B cell (primary cell): ENCODE measurements at regions of chr13 and their contacts with region 1.

Region 1: GRCh38 chr13:42594970-42595571 is 21.1 kb downstream of the TNFSF11 start:
- DNase-seq: peak; percentile 64
- ATAC-seq: peak; percentile 45
- H3K4me3 ChIP-seq: no peak overlapping the region
- H3K4me3 Mint-ChIP-seq: no peak overlapping the region
- H3K27ac ChIP-seq: no peak overlapping the region
- H3K27ac Mint-ChIP-seq: no peak overlapping the region
- H3K4me1 ChIP-seq: no peaks in the 10 kb centered on the region
- H3K4me1 Mint-ChIP-seq: no peaks in the 10 kb centered on the region
- H3K27me3 ChIP-seq: no peaks in the 10 kb centered on the region
- H3K27me3 Mint-ChIP-seq: no peaks in the 10 kb centered on the region
- CTCF ChIP-seq: peak; percentile 96

Region 2: GRCh38 chr13:42333613-42334328 is 261.3 kb before region 1 on chr13:
- CTCF ChIA-PET with region 1: interaction called, 14 read pairs
- POLR2A ChIA-PET with region 1: no interaction called
- intact Hi-C with region 1: loop called (anchors 2 kb)
- DNase-seq: peak; percentile 55
- ATAC-seq: peak; percentile 57
- H3K4me3 ChIP-seq: no peak overlapping the region
- H3K4me3 Mint-ChIP-seq: no peak overlapping the region
- H3K27ac ChIP-seq: no peak overlapping the region
- H3K27ac Mint-ChIP-seq: no peak overlapping the region
- H3K4me1 ChIP-seq: peaks cover 10 to 16% of the 10 kb centered on the region in 2 donors
- H3K4me1 Mint-ChIP-seq: peaks cover 19% of the 10 kb centered on the region
- H3K27me3 ChIP-seq: no peaks in the 10 kb centered on the region
- H3K27me3 Mint-ChIP-seq: no peaks in the 10 kb centered on the region
- CTCF ChIP-seq: peak; percentile 61

Region 3: GRCh38 chr13:42580644-42581043 is 14.4 kb before region 1 on chr13:
- CTCF ChIA-PET with region 1: interaction called, 10 read pairs
- POLR2A ChIA-PET with region 1: no interaction called
- intact Hi-C with region 1: no loop called
- DNase-seq: no peak
- ATAC-seq: no peak
- H3K4me3 ChIP-seq: no peak overlapping the region
- H3K4me3 Mint-ChIP-seq: no peak overlapping the region
- H3K27ac ChIP-seq: no peak overlapping the region
- H3K27ac Mint-ChIP-seq: no peak overlapping the region
- H3K4me1 ChIP-seq: peaks cover 0 to 3% of the 10 kb centered on the region in 2 donors
- H3K4me1 Mint-ChIP-seq: peaks cover 5% of the 10 kb centered on the region
- H3K27me3 ChIP-seq: peaks cover 0 to 7% (median 5%) of the 10 kb centered on the region in 4 experiments
- H3K27me3 Mint-ChIP-seq: peaks cover 23% of the 10 kb centered on the region
- CTCF ChIP-seq: no peak

Region 4: GRCh38 chr13:42623916-42624315 is 28.8 kb after region 1 on chr13:
- CTCF ChIA-PET with region 1: no interaction called
- POLR2A ChIA-PET with region 1: no interaction called
- intact Hi-C with region 1: no loop called
- DNase-seq: no peak
- ATAC-seq: no peak
- H3K4me3 ChIP-seq: no peak overlapping the region
- H3K4me3 Mint-ChIP-seq: no peak overlapping the region
- H3K27ac ChIP-seq: no peak overlapping the region
- H3K27ac Mint-ChIP-seq: no peak overlapping the region
- H3K4me1 ChIP-seq: no peaks in the 10 kb centered on the region
- H3K4me1 Mint-ChIP-seq: no peaks in the 10 kb centered on the region
- H3K27me3 ChIP-seq: peaks cover 0 to 3% (median 0%) of the 10 kb centered on the region in 4 experiments
- H3K27me3 Mint-ChIP-seq: no peaks in the 10 kb centered on the region
- CTCF ChIP-seq: no peak

Region 5: DNA sequence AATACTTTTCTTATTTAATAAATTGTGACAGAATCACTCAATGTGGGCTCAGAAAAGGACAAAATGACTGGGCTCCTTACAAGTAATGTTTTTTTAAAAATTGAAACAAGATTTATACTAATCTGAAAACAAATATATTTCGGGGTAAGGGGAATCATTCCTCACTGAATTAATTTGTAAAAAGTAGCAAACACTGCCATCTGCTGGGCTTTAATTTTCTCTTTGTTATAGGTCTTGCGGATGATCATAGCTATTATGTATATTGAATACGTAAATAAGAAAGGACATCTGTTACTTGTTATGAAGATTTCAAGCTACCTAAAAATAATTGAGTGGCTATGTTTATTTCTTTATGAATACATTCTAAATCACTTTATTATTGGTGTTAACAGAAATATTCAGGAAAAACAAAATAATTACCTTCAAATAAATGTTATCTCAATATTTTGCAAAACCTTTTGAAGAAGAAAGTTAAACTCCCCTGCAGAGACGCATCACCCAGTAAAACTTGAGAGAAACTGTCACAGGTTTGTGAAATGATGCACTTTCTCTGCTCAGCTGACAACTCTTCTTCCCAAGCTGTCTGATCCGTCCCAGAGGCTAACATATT is 1209.5 kb after region 1 on chr13:
- CTCF ChIA-PET with region 1: interaction called, 45 read pairs
- POLR2A ChIA-PET with region 1: no interaction called
- intact Hi-C with region 1: no loop called
- DNase-seq: peak; percentile 59
- ATAC-seq: no peak
- H3K4me3 ChIP-seq: no peak overlapping the region
- H3K4me3 Mint-ChIP-seq: no peak overlapping the region
- H3K27ac ChIP-seq: no peak overlapping the region
- H3K27ac Mint-ChIP-seq: no peak overlapping the region
- H3K4me1 ChIP-seq: no peaks in the 10 kb centered on the region
- H3K4me1 Mint-ChIP-seq: no peaks in the 10 kb centered on the region
- H3K27me3 ChIP-seq: no peaks in the 10 kb centered on the region
- H3K27me3 Mint-ChIP-seq: peaks cover 13% of the 10 kb centered on the region
- CTCF ChIP-seq: peak; percentile 85

Region 6: DNA sequence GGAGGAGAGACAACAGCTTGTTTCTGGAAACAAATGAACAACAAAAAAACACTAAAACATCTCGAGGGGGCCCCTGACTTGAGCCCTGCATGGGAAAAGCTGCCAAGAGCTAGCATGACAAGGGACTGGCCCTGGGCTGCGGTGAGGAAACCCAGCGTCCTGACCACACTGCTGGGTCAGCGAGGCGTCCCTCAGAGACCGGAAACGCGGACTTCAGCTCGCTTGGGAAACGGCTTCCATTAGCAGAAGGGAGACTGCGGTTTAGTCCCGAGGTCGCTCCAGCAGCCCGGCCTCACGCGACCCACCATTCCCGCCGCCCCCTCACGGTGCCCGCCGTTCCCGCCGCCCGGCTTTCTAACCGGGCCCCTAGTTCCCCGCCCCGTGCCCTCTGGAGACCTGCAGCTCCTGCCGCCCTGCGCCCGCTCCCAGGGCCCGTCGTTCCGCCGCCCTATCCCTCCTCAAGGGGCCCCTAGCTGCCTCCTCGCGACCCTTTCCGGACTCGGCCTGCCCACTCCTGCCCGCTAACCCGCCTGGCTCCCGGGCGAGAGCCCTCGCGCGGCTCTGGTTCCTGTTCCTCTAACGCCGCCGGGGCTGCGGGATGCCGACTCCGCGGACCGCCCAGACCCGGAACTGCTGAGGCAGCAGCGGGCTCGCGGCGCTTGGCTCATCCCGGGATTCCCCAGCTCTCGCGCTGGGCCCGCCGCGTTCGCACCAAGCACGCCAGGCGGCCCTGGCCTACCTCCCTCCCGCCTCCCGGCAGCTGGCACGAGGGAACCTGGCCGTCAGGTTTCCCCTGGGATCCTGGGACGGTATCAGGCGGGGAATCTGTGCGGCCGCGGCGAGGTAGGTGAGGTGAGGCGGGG is 1284.1 kb after region 1 on chr13 and contains the start of gene CCDC122:
- CTCF ChIA-PET with region 1: no interaction called
- POLR2A ChIA-PET with region 1: no interaction called
- intact Hi-C with region 1: loop called (anchors 10 kb)
- DNase-seq: peak; percentile 89
- ATAC-seq: peak; percentile 79
- H3K4me3 ChIP-seq: peak within 1 kb of the TSS; percentile 36 to 78 (median 75)
- H3K4me3 Mint-ChIP-seq: peak within 1 kb of the TSS; percentile 88
- H3K27ac ChIP-seq: peak within 1 kb of the TSS; percentile 76 to 92
- H3K27ac Mint-ChIP-seq: peak within 1 kb of the TSS; percentile 94
- H3K4me1 ChIP-seq: peaks cover 20 to 22% of the 10 kb centered on the region in 2 donors
- H3K4me1 Mint-ChIP-seq: peaks cover 31% of the 10 kb centered on the region
- H3K27me3 ChIP-seq: no peaks in the 10 kb centered on the region
- H3K27me3 Mint-ChIP-seq: no peaks in the 10 kb centered on the region
- CTCF ChIP-seq: no peak
- total RNA-seq, gene CCDC122: 10.7 and 12.1 TPM in 2 replicates